ENCODE measurements at regions of chr18 and their contacts with region 1.

Region 1: DNA sequence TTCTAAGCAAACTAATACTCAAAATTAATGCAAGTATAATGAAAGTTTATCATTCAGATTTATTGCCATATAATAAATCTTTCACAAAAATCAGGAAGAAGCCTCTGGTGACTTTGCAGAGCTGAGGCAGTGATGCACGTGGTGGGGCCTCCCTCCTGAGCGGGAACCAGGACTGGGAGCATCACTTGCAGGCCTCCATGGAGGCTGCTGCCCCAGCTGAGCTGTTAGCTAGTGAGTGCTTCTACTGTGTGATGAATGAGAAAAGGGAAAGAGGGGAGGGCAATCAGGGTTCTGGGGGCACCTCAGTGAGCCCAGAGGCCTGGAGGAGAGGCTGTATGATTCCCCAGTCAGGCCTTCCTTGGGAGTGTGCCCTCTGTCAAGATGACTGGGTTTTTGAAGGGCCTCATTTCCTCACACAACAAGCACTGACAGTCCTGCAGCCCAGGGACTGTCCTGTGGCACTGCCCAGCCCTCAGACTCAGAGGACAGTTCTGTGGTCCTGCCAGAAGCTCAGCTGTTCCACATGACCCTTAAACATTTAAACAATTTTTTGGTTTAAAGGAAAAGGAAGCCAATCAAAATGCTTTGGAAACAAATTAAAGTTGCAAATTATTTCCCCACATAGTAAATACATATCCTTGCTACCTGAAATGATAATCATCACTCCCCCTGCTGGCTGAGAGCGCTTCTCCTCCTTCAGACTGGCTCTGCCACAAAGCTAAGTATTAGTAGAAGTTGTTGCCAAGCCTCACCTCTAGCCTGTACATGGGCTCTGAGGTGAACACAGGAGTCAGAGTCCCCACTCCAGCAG is 90.9 kb upstream of the SMAD7 start:
- DNase-seq: peak; percentile 53
- H3K4me3 Mint-ChIP-seq: no peak overlapping the region
- H3K27ac Mint-ChIP-seq: no peak overlapping the region
- H3K4me1 Mint-ChIP-seq: peaks cover 3% of the 10 kb centered on the region
- H3K27me3 Mint-ChIP-seq: no peaks in the 10 kb centered on the region

Region 2: DNA sequence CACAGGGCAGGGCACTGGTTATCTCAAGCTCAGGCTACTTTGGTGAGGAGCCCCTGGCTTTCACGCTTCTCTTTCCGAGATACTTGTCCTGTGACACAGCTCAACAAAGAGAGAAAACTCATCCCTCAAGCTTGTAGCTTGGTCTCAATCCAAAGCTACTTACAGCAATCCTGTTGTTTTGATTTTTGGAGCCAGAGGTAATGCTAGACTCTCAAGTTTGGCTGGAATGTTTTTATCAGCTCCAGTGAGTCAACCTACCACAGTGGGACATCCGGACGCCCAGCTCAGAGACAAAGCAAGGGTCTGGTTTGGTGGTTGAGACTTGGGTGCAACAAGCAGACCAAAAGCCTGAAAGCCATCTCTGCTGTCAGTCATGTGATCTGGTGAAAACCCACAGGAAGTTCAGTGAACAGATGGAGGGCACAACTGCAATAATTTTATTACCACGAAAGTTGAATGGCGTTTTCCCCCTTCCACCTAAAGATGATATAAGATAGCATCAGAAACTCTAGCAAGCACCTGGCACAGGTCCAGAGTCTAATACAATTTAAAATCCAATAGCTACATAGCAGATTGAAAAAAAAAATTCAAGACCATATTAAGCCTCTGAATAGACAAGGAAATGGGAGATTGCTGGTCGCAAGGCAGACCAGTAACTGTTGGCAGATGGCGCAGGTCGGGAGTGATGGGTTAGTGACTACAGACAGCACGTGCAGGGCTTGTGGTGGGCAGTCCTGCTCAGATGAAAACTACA is 11.4 kb after region 1 on chr18:
- CTCF ChIA-PET with region 1: interaction called, 11 read pairs
- POLR2A ChIA-PET with region 1: interaction called, 3 read pairs
- DNase-seq: peak; percentile 46
- H3K4me3 Mint-ChIP-seq: no peak overlapping the region
- H3K27ac Mint-ChIP-seq: no peak overlapping the region
- H3K4me1 Mint-ChIP-seq: peaks cover 39% of the 10 kb centered on the region
- H3K27me3 Mint-ChIP-seq: no peaks in the 10 kb centered on the region